ENCODE measurements at regions of chr5 and their contacts with region 1.

Region 1: DNA sequence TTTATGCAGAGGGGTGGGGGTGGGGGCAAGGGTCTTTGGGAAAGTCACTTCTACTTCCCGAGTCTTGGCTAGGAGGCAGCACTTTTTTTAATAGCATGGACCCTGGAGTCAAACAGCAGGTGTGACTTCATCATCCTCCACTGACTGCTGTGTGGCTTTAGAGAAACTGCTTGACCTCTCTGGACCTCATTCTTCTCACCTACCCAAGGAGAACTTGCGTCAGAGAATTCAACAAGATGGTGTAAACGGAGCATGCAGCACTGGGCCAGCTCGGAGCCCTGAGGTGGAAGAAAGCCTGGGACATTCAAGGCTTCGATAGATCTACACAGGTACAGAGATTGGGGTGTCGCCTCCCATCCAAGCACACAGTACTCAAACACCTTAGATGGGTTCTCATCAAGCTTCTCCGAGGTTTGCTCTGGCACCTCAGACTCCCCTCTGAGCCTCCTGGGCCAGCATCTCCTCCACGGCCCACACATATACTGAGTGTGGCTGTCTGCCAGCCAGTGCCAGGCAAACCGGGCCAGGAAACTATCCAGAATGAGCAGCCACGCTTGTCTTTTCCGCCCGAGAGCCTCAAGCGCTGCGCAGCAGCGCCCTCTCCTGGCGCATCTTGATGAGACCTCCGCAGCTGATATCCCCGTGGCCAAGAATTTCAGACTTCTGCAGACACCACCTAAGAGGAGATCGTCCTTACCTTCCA is 4.6 kb upstream of the SLC25A48 start:
- DNase-seq: peak in 9 of 10 donors; percentile 74 to 88 (median 83)
- H3K4me3 ChIP-seq: no peak overlapping the region
- H3K27ac ChIP-seq: no peak overlapping the region
- H3K27me3 ChIP-seq: peaks cover 0 to 24% (median 0%) of the 10 kb centered on the region in 45 donors
- CTCF ChIP-seq: peak; percentile 63 to 95 (median 84)

Region 2: GRCh38 chr5:135560858-135561257 is 269.0 kb before region 1 on chr5:
- intact Hi-C with region 1: loop called (anchors 1 to 2 kb)
- DNase-seq: peak; percentile 66 to 88 (median 82)
- H3K4me3 ChIP-seq: peak overlapping the region in 16 of 59 donors; percentile 6 to 47 (median 20)
- H3K27ac ChIP-seq: no peak overlapping the region
- H3K27me3 ChIP-seq: peaks cover 0 to 30% (median 8%) of the 10 kb centered on the region in 45 donors
- CTCF ChIP-seq: peak; percentile 63 to 97 (median 91)

Measured in dorsolateral prefrontal cortex (tissue), 120 donors.